ENCODE measurements at regions of chr18 and their contacts with region 1.

Region 1: DNA sequence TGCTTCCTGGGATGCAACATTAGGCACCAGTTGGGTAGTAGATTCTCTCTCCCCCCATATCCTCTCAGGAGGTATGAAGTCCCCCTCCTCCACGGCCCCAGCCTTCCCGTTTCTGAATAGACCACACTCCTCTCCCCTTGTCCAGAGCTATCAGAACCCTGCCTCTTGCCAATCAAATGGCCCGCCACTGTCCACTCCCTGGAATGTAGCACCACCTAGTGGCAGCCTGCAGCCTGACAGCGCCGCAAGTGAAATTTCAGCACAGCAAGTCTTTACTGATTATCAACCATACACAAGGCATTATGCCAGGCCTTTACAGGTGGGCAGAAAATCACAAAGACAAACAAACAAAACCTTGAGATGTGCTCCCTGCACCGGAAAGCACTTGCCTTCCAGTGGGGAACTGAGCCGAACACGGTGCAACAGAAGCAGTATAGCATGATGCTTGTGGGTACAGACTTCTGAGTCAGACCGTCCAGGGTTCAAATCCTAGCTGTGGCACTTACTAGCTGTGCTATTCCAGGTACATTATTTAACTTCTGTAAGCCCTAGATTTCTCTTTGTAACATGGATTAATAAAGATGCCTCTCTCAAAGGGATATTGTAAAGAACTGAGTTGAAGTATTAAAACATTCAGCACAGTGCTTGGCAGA is 174.0 kb downstream of the SMAD2 start:
- DNase-seq: peak; percentile 28 to 66 (median 45)
- ATAC-seq: peak; percentile 32 to 58 (median 58)
- H3K4me3 ChIP-seq: no peak overlapping the region
- H3K27ac ChIP-seq: no peak overlapping the region
- H3K4me1 ChIP-seq: no peaks in the 10 kb centered on the region
- H3K27me3 ChIP-seq: peaks cover 0 to 26% (median 4%) of the 10 kb centered on the region in 9 donors
- CTCF ChIP-seq: peak; percentile 68 to 88 (median 84)
- POLR2A ChIP-seq: no peak

Region 2: DNA sequence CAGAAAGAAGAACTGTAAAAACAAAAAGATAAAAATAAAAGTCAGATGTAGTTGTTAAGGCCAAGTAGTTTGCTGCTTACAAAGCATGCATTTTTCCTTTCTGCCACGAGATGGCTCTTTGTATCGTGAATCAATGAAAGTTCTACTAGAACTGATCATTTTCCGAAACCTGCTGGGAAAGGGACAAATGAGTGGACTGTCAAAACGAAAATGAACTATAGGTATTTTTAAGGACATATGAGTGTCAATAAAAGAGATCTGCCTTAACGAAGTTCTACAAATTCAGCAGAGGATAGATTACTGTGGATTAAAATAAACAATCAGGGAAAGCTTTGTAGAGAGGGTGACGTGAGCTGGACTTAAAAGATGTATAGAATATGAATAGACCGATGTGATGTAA is 706.0 kb before region 1 on chr18:
- intact Hi-C with region 1: loop called in 2 of 10 experiments (anchors 5 kb)
- DNase-seq: peak in 1 of 5 donors; percentile 23
- ATAC-seq: no peak
- H3K4me3 ChIP-seq: no peak overlapping the region
- H3K27ac ChIP-seq: no peak overlapping the region
- H3K4me1 ChIP-seq: peaks cover 0 to 3% (median 0%) of the 10 kb centered on the region in 12 donors
- H3K27me3 ChIP-seq: no peaks in the 10 kb centered on the region
- CTCF ChIP-seq: peak; percentile 37 to 71 (median 58)
- POLR2A ChIP-seq: no peak

Region 3: DNA sequence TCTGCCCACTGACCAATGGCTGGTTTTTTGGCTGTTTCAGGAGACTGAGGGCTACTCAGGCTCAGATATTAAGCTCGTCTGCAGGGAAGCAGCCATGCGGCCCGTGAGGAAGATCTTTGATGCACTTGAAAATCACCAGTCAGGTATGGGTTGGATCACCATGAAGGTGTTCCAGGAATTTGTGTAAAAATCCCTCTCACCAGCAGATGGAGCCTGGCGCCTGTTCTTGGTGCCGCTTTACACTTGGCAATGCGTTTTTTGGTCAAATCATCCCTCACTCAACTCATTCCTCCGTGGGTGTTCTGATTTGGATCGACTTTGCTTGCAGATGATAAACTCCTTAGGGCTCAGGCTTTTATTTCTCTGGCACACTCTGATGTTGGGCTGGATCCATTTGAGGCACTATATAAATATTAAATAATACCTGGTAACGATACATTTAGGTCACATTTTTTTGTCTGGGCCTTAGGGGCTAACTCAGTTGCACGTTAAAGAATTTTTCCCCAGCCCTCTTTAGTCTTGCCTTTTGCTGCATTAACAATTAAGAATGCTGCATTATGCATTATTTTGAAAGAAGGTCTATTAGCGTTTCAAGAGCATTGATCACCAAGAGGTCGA is 656.2 kb before region 1 on chr18:
- intact Hi-C with region 1: loop called in 2 of 10 experiments (anchors 5 to 10 kb)
- DNase-seq: peak in 3 of 5 donors; percentile 20 to 31 (median 25)
- ATAC-seq: peak in 3 of 4 donors; percentile 47 to 79 (median 59)
- H3K4me3 ChIP-seq: no peak overlapping the region
- H3K27ac ChIP-seq: no peak overlapping the region
- H3K4me1 ChIP-seq: peaks cover 0 to 5% (median 0%) of the 10 kb centered on the region in 12 donors
- H3K27me3 ChIP-seq: no peaks in the 10 kb centered on the region
- CTCF ChIP-seq: peak; percentile 64 to 84 (median 72)
- POLR2A ChIP-seq: no peak

Region 4: GRCh38 chr18:47215554-47216138 is 540.8 kb before region 1 on chr18:
- intact Hi-C with region 1: loop called in 1 of 10 experiments (anchors 2 kb)
- DNase-seq: no peak
- ATAC-seq: peak in 3 of 4 donors; percentile 51 to 63 (median 57)
- H3K4me3 ChIP-seq: no peak overlapping the region
- H3K27ac ChIP-seq: no peak overlapping the region
- H3K4me1 ChIP-seq: no peaks in the 10 kb centered on the region
- H3K27me3 ChIP-seq: peaks cover 0 to 73% (median 10%) of the 10 kb centered on the region in 9 donors
- CTCF ChIP-seq: peak in 11 of 12 donors; percentile 26 to 64 (median 54)
- POLR2A ChIP-seq: no peak

Region 5: DNA sequence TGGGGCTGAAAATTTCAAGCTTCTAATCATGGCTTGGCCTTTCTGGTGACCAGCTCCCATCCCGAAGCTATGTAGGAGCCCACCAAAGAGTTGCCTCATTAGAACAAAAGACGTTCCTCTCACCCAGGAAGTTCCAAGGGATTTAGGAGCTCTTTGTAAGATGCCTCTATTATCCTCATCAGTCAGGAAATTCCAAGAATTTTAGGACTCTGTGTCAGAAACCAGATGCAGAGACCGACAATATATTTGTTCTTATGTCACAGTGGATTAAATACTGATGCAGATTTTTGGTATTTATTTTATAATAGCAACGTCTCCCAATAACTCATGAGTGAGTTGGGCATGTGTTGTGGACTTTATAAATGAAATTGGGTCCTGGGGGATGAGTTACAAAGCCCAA is 413.2 kb before region 1 on chr18:
- intact Hi-C with region 1: loop called in 1 of 10 experiments (anchors 10 kb)
- DNase-seq: no peak
- ATAC-seq: no peak
- H3K4me3 ChIP-seq: no peak overlapping the region
- H3K27ac ChIP-seq: no peak overlapping the region
- H3K4me1 ChIP-seq: no peaks in the 10 kb centered on the region
- H3K27me3 ChIP-seq: no peaks in the 10 kb centered on the region
- CTCF ChIP-seq: no peak
- POLR2A ChIP-seq: no peak

Measured in heart left ventricle (tissue), 16 donors.